Lower leg skin (tissue), 4 donors: ENCODE measurements at regions of chr12 and their contacts with region 1.

Region 1: DNA sequence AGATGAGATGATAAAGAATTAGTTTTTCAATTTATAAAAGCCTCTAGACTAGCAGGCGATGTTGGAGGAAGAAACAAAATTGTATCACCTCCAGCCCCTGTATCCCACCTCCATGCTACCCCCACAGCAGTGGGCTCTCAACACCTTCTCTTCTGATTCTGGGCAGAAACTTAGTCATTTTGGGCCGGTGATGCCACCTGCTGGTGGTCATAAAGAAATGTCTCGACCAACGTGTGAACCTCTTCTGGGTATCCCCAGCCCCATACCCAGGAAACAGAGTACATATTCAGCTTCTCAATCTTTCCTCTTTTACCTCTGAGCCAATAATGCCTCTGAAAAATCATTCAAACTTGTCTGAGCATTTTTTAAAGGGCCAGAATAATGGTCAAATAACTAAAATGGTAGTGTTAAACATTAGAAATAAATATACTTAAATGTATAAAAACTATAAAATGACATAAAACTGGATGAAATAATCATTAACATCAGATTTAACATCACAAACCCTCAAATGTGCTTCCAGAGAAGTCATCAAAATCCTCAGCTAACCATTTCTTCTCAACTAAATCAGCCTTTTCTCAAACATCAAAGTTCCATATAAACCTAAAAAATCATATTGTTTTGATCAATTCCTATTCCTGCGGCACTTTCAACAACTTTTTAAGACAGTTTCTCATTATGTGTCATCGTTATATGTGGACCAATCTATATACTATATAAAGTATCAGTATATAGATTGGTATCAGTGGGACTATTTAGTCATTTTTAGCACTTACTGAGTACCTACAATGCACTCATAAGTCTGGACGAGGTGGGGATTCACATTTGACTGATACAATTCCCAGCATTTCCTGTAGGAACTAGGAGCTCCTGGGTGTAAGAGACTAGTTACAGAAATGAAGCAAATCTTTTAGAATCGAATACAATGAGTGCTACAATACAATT is 69.4 kb downstream of the ATXN2 start:
- DNase-seq: no peak
- H3K4me3 ChIP-seq: no peak overlapping the region
- CTCF ChIP-seq: no peak
- POLR2A ChIP-seq: no peak

Region 2: DNA sequence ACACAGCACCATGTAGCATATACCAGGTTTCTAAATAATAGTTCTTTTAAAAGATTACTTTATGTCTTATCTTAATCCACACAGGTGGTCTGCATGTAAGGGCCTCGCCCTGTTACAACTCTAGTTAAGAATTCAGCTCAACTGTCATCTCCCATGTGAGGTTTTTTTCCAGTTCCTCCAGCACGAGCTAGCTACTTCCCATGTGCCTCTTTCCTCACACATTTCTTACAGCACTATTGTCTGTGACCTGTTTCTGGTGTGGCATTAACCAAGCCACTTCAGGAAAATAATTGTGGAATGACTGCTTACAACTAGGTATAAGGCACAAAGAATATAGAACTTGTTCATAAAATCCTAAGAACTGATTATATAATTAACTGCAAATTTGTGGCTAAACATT is 58.5 kb before region 1 on chr12:
- intact Hi-C with region 1: loop called (anchors 10 kb)
- DNase-seq: no peak
- H3K4me3 ChIP-seq: no peak overlapping the region
- CTCF ChIP-seq: no peak
- POLR2A ChIP-seq: no peak